MCF 10A (cell line): ENCODE measurements at regions of chr5 and their contacts with region 1.

Region 1: DNA sequence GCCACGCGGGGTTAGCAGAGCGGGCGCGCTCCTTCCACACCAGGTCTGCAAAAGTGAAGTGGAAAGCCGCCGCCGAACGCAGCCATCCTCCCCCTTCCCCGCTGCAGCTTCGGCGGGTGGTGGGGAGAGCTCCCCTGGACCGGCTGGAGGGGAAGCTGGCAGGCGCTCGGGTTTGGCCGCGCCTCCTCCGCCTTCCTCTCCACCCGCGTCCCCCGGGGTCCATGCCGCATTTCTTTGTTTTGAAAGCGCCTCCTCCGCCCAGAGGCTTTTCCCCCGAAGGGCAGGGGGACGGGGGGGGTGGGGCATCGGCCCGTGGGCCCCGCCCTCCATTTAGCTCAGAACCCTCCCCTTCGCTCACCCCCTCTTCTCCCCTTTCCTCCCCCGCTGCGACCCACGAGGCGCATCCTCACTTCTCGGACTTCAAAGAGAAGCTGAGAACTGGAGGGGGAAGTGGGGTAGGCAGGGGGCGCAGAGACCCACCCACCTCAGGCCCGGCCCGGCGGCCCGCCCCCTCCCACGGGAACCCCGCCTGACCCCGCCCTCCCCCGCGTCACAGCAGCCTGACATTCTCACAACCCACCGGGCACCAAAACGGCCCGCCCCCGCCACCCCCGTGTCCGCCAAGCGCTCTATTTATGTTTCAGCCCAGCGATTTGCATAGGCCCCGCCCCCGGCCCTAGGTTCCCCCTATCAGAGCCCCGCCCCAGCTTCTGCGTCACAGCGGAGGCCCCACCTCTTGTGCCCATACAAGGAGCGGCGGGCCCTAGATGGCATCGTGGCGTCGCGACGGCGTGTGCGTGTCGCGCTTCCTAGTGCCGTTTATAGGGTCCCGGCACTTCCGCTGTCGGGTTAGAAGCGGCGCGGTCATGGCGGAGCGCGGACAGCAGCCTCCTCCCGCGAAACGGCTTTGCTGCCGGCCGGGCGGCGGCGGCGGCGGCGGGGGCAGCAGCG is at the start of gene ZSWIM6:
- DNase-seq: peak; percentile 99
- H3K4me3 Mint-ChIP-seq: peak within 1 kb of the TSS; percentile 76
- H3K27ac Mint-ChIP-seq: peak within 1 kb of the TSS; percentile 93
- H3K4me1 Mint-ChIP-seq: peaks cover 45% of the 10 kb centered on the region
- H3K27me3 Mint-ChIP-seq: no peaks in the 10 kb centered on the region
- CTCF ChIP-seq: no peak
- total RNA-seq, gene ZSWIM6: 12.0 and 13.5 TPM in 2 replicates

Region 2: GRCh38 chr5:60944904-60945812 is 386.5 kb before region 1 on chr5 and contains the starts of genes ERCC8 and NDUFAF2:
- CTCF ChIA-PET with region 1: no interaction called
- POLR2A ChIA-PET with region 1: interaction called, 11 read pairs
- intact Hi-C with region 1: no loop called
- DNase-seq: peak; percentile 95
- H3K4me3 Mint-ChIP-seq: no peak within 1 kb of the TSS
- H3K27ac Mint-ChIP-seq: no peak within 1 kb of the TSS
- H3K4me1 Mint-ChIP-seq: no peaks in the 10 kb centered on the region
- H3K27me3 Mint-ChIP-seq: no peaks in the 10 kb centered on the region
- CTCF ChIP-seq: no peak
- total RNA-seq, gene ERCC8: 13.7 and 17.2 TPM in 2 replicates
- total RNA-seq, gene NDUFAF2: 120 and 141 TPM in 2 replicates

Region 3: GRCh38 chr5:61167382-61167781 is 164.3 kb before region 1 on chr5:
- CTCF ChIA-PET with region 1: interaction called, 26 read pairs
- POLR2A ChIA-PET with region 1: interaction called, 62 read pairs
- intact Hi-C with region 1: loop called (anchors 1 kb)
- DNase-seq: peak; percentile 54
- H3K4me3 Mint-ChIP-seq: no peak overlapping the region
- H3K27ac Mint-ChIP-seq: no peak overlapping the region
- H3K4me1 Mint-ChIP-seq: peaks cover 8% of the 10 kb centered on the region
- H3K27me3 Mint-ChIP-seq: no peaks in the 10 kb centered on the region
- CTCF ChIP-seq: peak; percentile 50

Region 4: DNA sequence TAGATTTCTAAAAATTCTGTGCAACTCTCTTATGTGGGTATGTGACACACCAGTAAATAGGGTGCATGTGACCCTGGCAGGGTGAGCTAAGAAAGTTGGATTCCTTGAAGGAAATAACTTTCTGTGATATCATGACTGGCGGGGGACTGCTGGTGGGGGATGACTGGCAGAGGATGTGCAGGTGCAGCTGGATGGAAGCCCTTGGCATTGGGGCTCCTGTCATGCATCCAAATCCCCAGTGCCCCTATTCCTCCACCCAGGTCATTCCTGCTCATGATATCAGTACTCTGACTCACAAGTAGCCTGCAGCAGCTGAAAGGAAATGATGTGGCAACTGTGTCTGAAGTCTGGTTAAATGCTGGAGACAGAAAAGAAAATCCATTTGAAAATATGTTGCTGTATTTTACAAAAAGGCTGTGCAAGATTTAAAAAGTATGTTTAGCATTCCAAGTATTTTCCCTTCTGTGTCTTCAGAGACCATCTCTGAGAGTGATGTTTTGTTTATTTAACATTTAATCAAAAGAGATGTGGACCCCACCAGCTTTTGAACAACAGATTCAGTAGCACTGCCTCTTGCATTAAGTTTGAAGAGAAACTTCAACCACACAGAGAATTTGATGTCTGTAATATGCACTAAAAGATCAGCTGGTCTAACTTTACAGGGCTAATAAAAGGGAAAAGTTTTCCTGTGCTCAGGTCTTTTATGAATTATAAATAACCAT is 17.6 kb before region 1 on chr5:
- CTCF ChIA-PET with region 1: interaction called, 13 read pairs
- POLR2A ChIA-PET with region 1: interaction called, 28 read pairs
- intact Hi-C with region 1: loop called (anchors 1 kb)
- DNase-seq: peak; percentile 84
- H3K4me3 Mint-ChIP-seq: no peak overlapping the region
- H3K27ac Mint-ChIP-seq: peak overlapping the region; percentile 73
- H3K4me1 Mint-ChIP-seq: peaks cover 20% of the 10 kb centered on the region
- H3K27me3 Mint-ChIP-seq: no peaks in the 10 kb centered on the region
- CTCF ChIP-seq: no peak

Region 5: GRCh38 chr5:61534481-61535267 is 203.0 kb after region 1 on chr5:
- CTCF ChIA-PET with region 1: interaction called, 4 read pairs
- POLR2A ChIA-PET with region 1: interaction called, 3 read pairs
- intact Hi-C with region 1: loop called (anchors 5 kb)
- DNase-seq: no peak
- H3K4me3 Mint-ChIP-seq: no peak overlapping the region
- H3K27ac Mint-ChIP-seq: no peak overlapping the region
- H3K4me1 Mint-ChIP-seq: peaks cover 11% of the 10 kb centered on the region
- H3K27me3 Mint-ChIP-seq: no peaks in the 10 kb centered on the region
- CTCF ChIP-seq: no peak

Region 6: GRCh38 chr5:61916621-61917620 is 585.2 kb after region 1 on chr5:
- CTCF ChIA-PET with region 1: interaction called, 3 read pairs
- POLR2A ChIA-PET with region 1: interaction called, 13 read pairs
- intact Hi-C with region 1: no loop called
- DNase-seq: peak; percentile 81
- H3K4me3 Mint-ChIP-seq: peak overlapping the region; percentile 0
- H3K27ac Mint-ChIP-seq: peak overlapping the region; percentile 43
- H3K4me1 Mint-ChIP-seq: peaks cover 27% of the 10 kb centered on the region
- H3K27me3 Mint-ChIP-seq: no peaks in the 10 kb centered on the region
- CTCF ChIP-seq: no peak